Natural killer cell (primary cell): ENCODE measurements at regions of chrX and their contacts with region 1.

Region 1: DNA sequence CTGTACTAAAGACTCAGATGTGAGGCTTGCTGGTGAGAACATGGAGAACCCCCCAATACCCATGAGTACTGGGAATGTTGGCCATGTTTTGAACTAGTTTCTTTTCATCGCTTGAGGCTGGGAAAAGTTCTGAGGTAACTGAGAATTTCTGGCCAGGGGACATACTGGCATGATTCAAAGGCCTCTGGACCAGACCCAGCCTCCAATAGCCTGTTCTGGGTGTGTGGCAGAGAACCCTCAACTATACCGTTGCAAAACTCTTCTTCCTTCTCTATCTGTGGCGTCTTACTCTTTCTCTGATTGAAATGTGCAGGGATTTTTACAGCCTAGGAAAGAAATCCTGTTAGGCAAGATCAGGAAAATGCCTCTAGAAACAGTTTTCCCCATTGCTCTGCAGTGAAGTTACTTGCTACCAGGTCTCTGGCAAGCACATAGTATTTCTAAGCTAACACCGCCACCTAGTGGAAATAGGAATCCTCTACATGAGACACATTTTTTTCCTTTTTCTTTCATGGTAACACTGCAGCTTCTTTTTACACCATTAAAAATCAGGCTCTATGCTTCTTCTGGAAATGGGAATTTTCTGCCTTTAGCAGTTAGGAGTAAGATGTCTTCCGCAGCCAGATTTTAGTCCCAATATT is 170.7 kb upstream of the ZCCHC13 start:
- DNase-seq: peak in 1 of 2 donors; percentile 67
- ATAC-seq: peak; percentile 57 to 80 (median 62)
- H3K4me3 ChIP-seq: no peak overlapping the region
- H3K4me3 Mint-ChIP-seq: no peak overlapping the region
- H3K27ac ChIP-seq: no peak overlapping the region
- H3K27ac Mint-ChIP-seq: no peak overlapping the region
- H3K4me1 ChIP-seq: no peaks in the 10 kb centered on the region
- H3K4me1 Mint-ChIP-seq: no peaks in the 10 kb centered on the region
- H3K27me3 ChIP-seq: no peaks in the 10 kb centered on the region
- H3K27me3 Mint-ChIP-seq: peaks cover 0 to 17% of the 10 kb centered on the region in 2 donors
- CTCF ChIP-seq: peak; percentile 51

Region 2: DNA sequence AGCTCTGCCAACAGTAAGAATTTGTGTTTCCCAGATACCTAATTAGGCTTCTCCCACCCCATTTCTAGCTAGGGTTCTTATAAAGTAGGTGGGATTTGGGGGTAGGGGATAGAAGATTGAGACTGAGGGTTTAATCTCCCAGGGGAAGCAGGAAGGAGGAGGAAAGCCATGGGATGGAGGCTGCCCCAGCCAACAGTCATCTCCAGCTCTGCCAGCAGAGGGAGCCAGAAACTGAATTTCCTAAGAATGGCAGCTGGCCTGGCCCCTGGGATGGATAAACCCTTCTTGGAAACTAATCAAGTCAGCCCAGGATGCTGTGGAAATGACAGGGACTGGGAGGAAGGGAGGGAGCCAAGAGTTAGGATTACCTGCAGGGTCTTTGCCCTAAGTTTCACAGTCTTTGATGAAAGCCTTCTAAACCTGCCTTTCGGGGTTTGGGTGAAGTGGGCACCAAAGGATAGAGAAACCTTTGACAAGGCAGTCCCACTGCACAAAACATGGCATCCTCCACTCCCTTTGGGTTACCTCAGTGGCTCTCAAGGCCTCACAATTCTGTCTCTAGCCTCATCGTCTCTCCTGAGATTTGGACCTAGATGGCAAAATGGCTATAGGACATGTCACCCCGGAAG is 1887.7 kb before region 1 on chrX:
- intact Hi-C with region 1: loop called (anchors 10 kb)
- DNase-seq: peak; percentile 15 to 56
- ATAC-seq: peak in 1 of 3 donors; percentile 61
- H3K4me3 ChIP-seq: no peak overlapping the region
- H3K4me3 Mint-ChIP-seq: no peak overlapping the region
- H3K27ac ChIP-seq: no peak overlapping the region
- H3K27ac Mint-ChIP-seq: no peak overlapping the region
- H3K4me1 ChIP-seq: no peaks in the 10 kb centered on the region
- H3K4me1 Mint-ChIP-seq: no peaks in the 10 kb centered on the region
- H3K27me3 ChIP-seq: no peaks in the 10 kb centered on the region
- H3K27me3 Mint-ChIP-seq: no peaks in the 10 kb centered on the region
- CTCF ChIP-seq: peak; percentile 59

Region 3: DNA sequence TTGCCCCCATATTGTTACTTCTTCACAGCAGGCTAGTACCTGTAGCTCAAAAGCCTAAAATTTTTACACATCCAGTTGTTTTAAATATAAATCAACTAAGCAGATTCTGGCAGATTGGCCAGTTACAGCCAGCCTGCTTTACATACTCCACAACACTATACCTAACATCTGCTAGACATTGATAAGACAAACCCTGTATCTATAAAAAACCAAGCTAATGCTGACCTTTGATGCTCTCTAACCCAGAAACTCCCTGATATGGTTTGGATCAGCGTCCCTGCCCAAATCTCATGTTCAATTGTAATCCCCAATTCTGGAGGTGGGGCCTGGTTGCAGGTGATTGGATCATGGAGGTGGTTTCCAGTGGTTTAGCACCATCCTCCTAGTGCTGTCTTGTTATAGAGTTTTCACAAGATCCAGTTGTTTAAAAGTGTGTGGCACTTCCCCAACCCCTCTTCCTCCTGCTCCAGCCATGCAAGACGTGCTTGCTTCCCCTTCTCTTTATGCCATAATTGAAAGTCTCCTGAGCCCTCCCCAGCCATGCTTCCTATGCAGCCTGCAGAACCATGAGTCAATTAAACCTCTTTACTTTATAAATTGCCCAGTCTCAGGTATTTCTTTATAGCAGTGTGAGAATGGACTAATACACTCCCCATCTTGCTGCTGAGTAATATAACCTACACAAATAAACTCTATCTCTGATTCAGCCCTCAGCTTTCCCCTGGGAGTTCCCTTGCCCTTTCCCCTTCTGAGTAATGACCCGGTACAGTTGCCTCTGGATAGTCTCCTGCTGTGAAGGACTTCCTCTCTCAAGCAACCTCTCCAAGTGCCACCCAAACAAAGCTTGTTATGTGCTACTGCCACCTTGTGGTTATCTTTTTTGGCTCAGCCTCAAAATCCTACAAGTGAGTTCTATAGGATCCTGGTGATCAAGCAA is 210.3 kb after region 1 on chrX:
- intact Hi-C with region 1: loop called (anchors 5 kb)
- DNase-seq: peak in 1 of 2 donors; percentile 72
- ATAC-seq: peak; percentile 49 to 73 (median 49)
- H3K4me3 ChIP-seq: no peak overlapping the region
- H3K4me3 Mint-ChIP-seq: no peak overlapping the region
- H3K27ac ChIP-seq: no peak overlapping the region
- H3K27ac Mint-ChIP-seq: no peak overlapping the region
- H3K4me1 ChIP-seq: no peaks in the 10 kb centered on the region
- H3K4me1 Mint-ChIP-seq: peaks cover 0 to 6% of the 10 kb centered on the region in 2 donors
- H3K27me3 ChIP-seq: no peaks in the 10 kb centered on the region
- H3K27me3 Mint-ChIP-seq: peaks cover 7 to 31% of the 10 kb centered on the region in 2 donors
- CTCF ChIP-seq: peak; percentile 53